ENCODE measurements at regions of chr18 and their contacts with region 1.

Region 1: GRCh38 chr18:3585656-3586509 is 135.9 kb downstream of the TGIF1 start:
- DNase-seq: peak in 34 of 35 experiments; percentile 27 to 83 (median 58)
- ATAC-seq: peak in 3 of 4 experiments; percentile 65 to 87 (median 74)
- H3K4me3 ChIP-seq: no peak overlapping the region
- H3K4me3 Mint-ChIP-seq: no peak overlapping the region
- H3K27ac ChIP-seq: no peak overlapping the region
- H3K27ac Mint-ChIP-seq: no peak overlapping the region
- H3K4me1 ChIP-seq: peaks cover 0 to 8% of the 10 kb centered on the region in 2 experiments
- H3K4me1 Mint-ChIP-seq: peaks cover 9 to 25% (median 13%) of the 10 kb centered on the region in 3 donors
- H3K27me3 ChIP-seq: peaks cover 0 to 3% of the 10 kb centered on the region in 2 experiments
- H3K27me3 Mint-ChIP-seq: no peaks in the 10 kb centered on the region

Region 2: DNA sequence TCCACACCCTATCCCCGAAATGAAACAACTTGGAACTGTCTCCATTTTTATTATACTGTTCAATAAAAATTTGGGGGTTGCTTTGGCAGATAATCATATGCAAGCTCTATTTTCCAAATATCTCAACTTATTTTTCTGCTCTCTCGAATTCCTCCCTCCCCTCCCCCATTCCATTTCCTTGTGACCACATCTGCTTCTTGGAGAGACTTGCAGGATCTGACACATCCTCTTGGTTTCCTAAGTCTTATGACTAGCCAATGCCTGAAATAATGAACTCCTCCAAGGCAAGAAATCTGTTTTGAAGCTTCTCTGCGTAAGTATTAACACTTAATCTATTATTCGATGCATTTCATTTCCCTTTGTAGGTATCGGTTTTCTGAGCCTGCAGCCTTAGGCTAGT is 119.8 kb before region 1 on chr18:
- CTCF ChIA-PET with region 1: interaction called, 5 to 13 read pairs
- POLR2A ChIA-PET with region 1: no interaction called
- DNase-seq: no peak
- ATAC-seq: no peak
- H3K4me3 ChIP-seq: no peak overlapping the region
- H3K4me3 Mint-ChIP-seq: peak overlapping the region in 1 of 3 donors; percentile 12
- H3K27ac ChIP-seq: no peak overlapping the region
- H3K27ac Mint-ChIP-seq: peak overlapping the region; percentile 73 to 75
- H3K4me1 ChIP-seq: peaks cover 10 to 13% of the 10 kb centered on the region in 2 experiments
- H3K4me1 Mint-ChIP-seq: peaks cover 16 to 21% (median 17%) of the 10 kb centered on the region in 3 donors
- H3K27me3 ChIP-seq: no peaks in the 10 kb centered on the region
- H3K27me3 Mint-ChIP-seq: no peaks in the 10 kb centered on the region

Region 3: GRCh38 chr18:3498698-3499471 is 87.0 kb before region 1 on chr18:
- CTCF ChIA-PET with region 1: interaction called in 1 of 2 experiments, 4 read pairs
- POLR2A ChIA-PET with region 1: interaction called in 1 of 2 experiments, 11 read pairs
- DNase-seq: peak in 10 of 35 experiments; percentile 0 to 21 (median 6)
- ATAC-seq: peak; percentile 47 to 53 (median 48)
- H3K4me3 ChIP-seq: peak overlapping the region in 1 of 2 donors; percentile 62
- H3K4me3 Mint-ChIP-seq: peak overlapping the region; percentile 57 to 78 (median 72)
- H3K27ac ChIP-seq: no peak overlapping the region
- H3K27ac Mint-ChIP-seq: no peak overlapping the region
- H3K4me1 ChIP-seq: peaks cover 0 to 9% of the 10 kb centered on the region in 2 experiments
- H3K4me1 Mint-ChIP-seq: peaks cover 19 to 22% (median 20%) of the 10 kb centered on the region in 3 donors
- H3K27me3 ChIP-seq: peaks cover 0 to 21% of the 10 kb centered on the region in 2 experiments
- H3K27me3 Mint-ChIP-seq: peaks cover 23 to 26% of the 10 kb centered on the region in 2 donors

Region 4: DNA sequence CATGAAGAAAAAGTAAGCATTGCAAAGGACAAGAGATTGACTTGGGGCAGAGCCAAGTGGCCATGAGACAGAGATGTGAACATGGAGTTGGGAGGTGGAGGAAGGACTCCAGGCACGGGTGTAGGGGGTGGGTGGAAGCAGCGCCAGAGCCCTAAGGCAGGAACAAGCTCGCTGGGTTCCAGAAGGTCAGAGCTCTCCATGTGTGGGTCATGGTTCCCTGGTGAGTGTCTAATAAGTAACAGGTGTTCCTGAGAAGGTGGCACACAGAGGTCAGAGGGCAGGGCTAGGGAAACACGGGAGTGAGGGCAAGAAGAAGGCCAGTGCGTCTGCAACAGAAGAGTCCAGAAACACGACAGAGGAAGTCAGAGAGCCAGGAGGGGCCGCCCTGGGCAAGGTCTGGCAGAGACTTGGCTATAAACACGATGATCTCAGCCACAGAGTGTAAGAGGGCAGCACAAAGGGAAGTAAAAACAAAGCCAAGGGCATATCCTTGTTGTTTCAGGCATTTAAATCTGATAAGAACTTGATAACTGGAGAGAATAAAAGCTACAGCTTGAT is 124.9 kb after region 1 on chr18:
- CTCF ChIA-PET with region 1: no interaction called
- POLR2A ChIA-PET with region 1: no interaction called
- DNase-seq: peak in 1 of 35 experiments; percentile 9
- ATAC-seq: no peak
- H3K4me3 ChIP-seq: no peak overlapping the region
- H3K4me3 Mint-ChIP-seq: no peak overlapping the region
- H3K27ac ChIP-seq: no peak overlapping the region
- H3K27ac Mint-ChIP-seq: peak overlapping the region in 1 of 2 donors; percentile 37
- H3K4me1 ChIP-seq: peaks cover 0 to 3% of the 10 kb centered on the region in 2 experiments
- H3K4me1 Mint-ChIP-seq: peaks cover 4 to 8% (median 8%) of the 10 kb centered on the region in 3 donors
- H3K27me3 ChIP-seq: peaks cover 0 to 8% of the 10 kb centered on the region in 2 experiments
- H3K27me3 Mint-ChIP-seq: peaks cover 19 to 32% of the 10 kb centered on the region in 2 donors

Region 5: DNA sequence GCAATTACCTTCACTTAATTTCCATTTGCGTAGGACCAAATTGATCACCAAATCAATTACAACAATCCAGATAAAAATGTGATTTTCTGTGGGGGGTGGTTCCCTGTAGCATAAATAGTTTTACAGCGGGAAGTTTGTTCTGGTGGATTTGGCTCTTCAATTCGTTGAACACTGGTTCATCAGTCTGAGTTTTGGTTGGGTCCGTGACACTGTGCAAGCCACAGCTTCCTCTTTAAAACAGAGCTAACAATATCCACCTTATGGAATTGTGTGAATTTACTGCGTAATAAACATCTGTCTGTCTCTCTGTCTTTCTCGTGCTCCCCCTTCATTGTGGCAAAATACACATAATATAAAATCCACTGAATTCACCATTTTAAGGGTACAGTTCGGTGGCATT is 174.9 kb after region 1 on chr18:
- CTCF ChIA-PET with region 1: no interaction called
- POLR2A ChIA-PET with region 1: no interaction called
- DNase-seq: no peak
- ATAC-seq: no peak
- H3K4me3 ChIP-seq: no peak overlapping the region
- H3K4me3 Mint-ChIP-seq: no peak overlapping the region
- H3K27ac ChIP-seq: no peak overlapping the region
- H3K27ac Mint-ChIP-seq: no peak overlapping the region
- H3K4me1 ChIP-seq: no peaks in the 10 kb centered on the region
- H3K4me1 Mint-ChIP-seq: no peaks in the 10 kb centered on the region
- H3K27me3 ChIP-seq: peaks cover 0 to 3% of the 10 kb centered on the region in 2 experiments
- H3K27me3 Mint-ChIP-seq: peaks cover 8 to 18% of the 10 kb centered on the region in 2 donors

Region 6: GRCh38 chr18:3836483-3837335 is 250.8 kb after region 1 on chr18:
- CTCF ChIA-PET with region 1: no interaction called
- POLR2A ChIA-PET with region 1: no interaction called
- DNase-seq: no peak
- ATAC-seq: no peak
- H3K4me3 ChIP-seq: no peak overlapping the region
- H3K4me3 Mint-ChIP-seq: no peak overlapping the region
- H3K27ac ChIP-seq: no peak overlapping the region
- H3K27ac Mint-ChIP-seq: no peak overlapping the region
- H3K4me1 ChIP-seq: no peaks in the 10 kb centered on the region
- H3K4me1 Mint-ChIP-seq: no peaks in the 10 kb centered on the region
- H3K27me3 ChIP-seq: peaks cover 0 to 2% of the 10 kb centered on the region in 2 experiments
- H3K27me3 Mint-ChIP-seq: peaks cover 13 to 18% of the 10 kb centered on the region in 2 donors